CD8-positive, alpha-beta T cell (primary cell): ENCODE measurements at regions of chr5 and their contacts with region 1.

Region 1: GRCh38 chr5:81301271-81302015 is at the start of gene ZCCHC9:
- DNase-seq: peak; percentile 85 to 98 (median 94)
- ATAC-seq: peak; percentile 87
- H3K4me3 ChIP-seq: peak within 1 kb of the TSS; percentile 75 to 91
- H3K4me3 Mint-ChIP-seq: peak within 1 kb of the TSS; percentile 93
- H3K27ac ChIP-seq: peak within 1 kb of the TSS; percentile 79 to 87
- H3K27ac Mint-ChIP-seq: peak within 1 kb of the TSS; percentile 97
- H3K4me1 ChIP-seq: peaks cover 31% of the 10 kb centered on the region
- H3K4me1 Mint-ChIP-seq: peaks cover 60% of the 10 kb centered on the region
- H3K27me3 ChIP-seq: no peaks in the 10 kb centered on the region
- H3K27me3 Mint-ChIP-seq: no peaks in the 10 kb centered on the region
- CTCF ChIP-seq: no peak
- total RNA-seq, gene ZCCHC9: 14.6 to 15.3 TPM

Region 2: GRCh38 chr5:79514391-79515105 is 1786.9 kb before region 1 on chr5:
- CTCF ChIA-PET with region 1: no interaction called
- POLR2A ChIA-PET with region 1: no interaction called
- intact Hi-C with region 1: loop called in 1 of 2 experiments (anchors 10 kb)
- DNase-seq: peak; percentile 80 to 98 (median 92)
- ATAC-seq: peak; percentile 84
- H3K4me3 ChIP-seq: peak overlapping the region; percentile 62 to 73
- H3K4me3 Mint-ChIP-seq: peak overlapping the region; percentile 99
- H3K27ac ChIP-seq: peak overlapping the region; percentile 91 to 97
- H3K27ac Mint-ChIP-seq: peak overlapping the region; percentile 99
- H3K4me1 ChIP-seq: peaks cover 19% of the 10 kb centered on the region
- H3K4me1 Mint-ChIP-seq: peaks cover 42% of the 10 kb centered on the region
- H3K27me3 ChIP-seq: peaks cover 6 to 7% of the 10 kb centered on the region in 2 experiments
- H3K27me3 Mint-ChIP-seq: peaks cover 5% of the 10 kb centered on the region
- CTCF ChIP-seq: peak; percentile 13

Region 3: GRCh38 chr5:80255732-80256479 is 1045.5 kb before region 1 on chr5 and contains the start of gene SERINC5:
- CTCF ChIA-PET with region 1: no interaction called
- POLR2A ChIA-PET with region 1: no interaction called
- intact Hi-C with region 1: loop called in 1 of 2 experiments (anchors 10 kb)
- DNase-seq: peak; percentile 69 to 92 (median 83)
- ATAC-seq: peak; percentile 74
- H3K4me3 ChIP-seq: peak within 1 kb of the TSS; percentile 83 to 91
- H3K4me3 Mint-ChIP-seq: peak within 1 kb of the TSS; percentile 99
- H3K27ac ChIP-seq: peak within 1 kb of the TSS; percentile 89 to 94
- H3K27ac Mint-ChIP-seq: peak within 1 kb of the TSS; percentile 99
- H3K4me1 ChIP-seq: peaks cover 36% of the 10 kb centered on the region
- H3K4me1 Mint-ChIP-seq: peaks cover 57% of the 10 kb centered on the region
- H3K27me3 ChIP-seq: no peaks in the 10 kb centered on the region
- H3K27me3 Mint-ChIP-seq: no peaks in the 10 kb centered on the region
- CTCF ChIP-seq: no peak
- total RNA-seq, gene SERINC5: 112 to 117 TPM

Region 4: GRCh38 chr5:81014348-81014747 is 287.1 kb before region 1 on chr5:
- CTCF ChIA-PET with region 1: no interaction called
- POLR2A ChIA-PET with region 1: no interaction called
- intact Hi-C with region 1: loop called (anchors 10 kb)
- DNase-seq: peak in 1 of 9 experiments; percentile 25
- ATAC-seq: no peak
- H3K4me3 ChIP-seq: no peak overlapping the region
- H3K4me3 Mint-ChIP-seq: no peak overlapping the region
- H3K27ac ChIP-seq: no peak overlapping the region
- H3K27ac Mint-ChIP-seq: peak overlapping the region; percentile 58
- H3K4me1 ChIP-seq: peaks cover 52% of the 10 kb centered on the region
- H3K4me1 Mint-ChIP-seq: peaks cover 76% of the 10 kb centered on the region
- H3K27me3 ChIP-seq: no peaks in the 10 kb centered on the region
- H3K27me3 Mint-ChIP-seq: no peaks in the 10 kb centered on the region
- CTCF ChIP-seq: no peak

Region 5: GRCh38 chr5:81352954-81353588 is 51.6 kb after region 1 on chr5:
- CTCF ChIA-PET with region 1: no interaction called
- POLR2A ChIA-PET with region 1: no interaction called
- intact Hi-C with region 1: no loop called
- DNase-seq: no peak
- ATAC-seq: no peak
- H3K4me3 ChIP-seq: no peak overlapping the region
- H3K4me3 Mint-ChIP-seq: no peak overlapping the region
- H3K27ac ChIP-seq: no peak overlapping the region
- H3K27ac Mint-ChIP-seq: no peak overlapping the region
- H3K4me1 ChIP-seq: no peaks in the 10 kb centered on the region
- H3K4me1 Mint-ChIP-seq: no peaks in the 10 kb centered on the region
- H3K27me3 ChIP-seq: no peaks in the 10 kb centered on the region
- H3K27me3 Mint-ChIP-seq: peaks cover 2% of the 10 kb centered on the region
- CTCF ChIP-seq: no peak

Region 6: GRCh38 chr5:81851481-81852178 is 550.2 kb after region 1 on chr5:
- CTCF ChIA-PET with region 1: no interaction called
- POLR2A ChIA-PET with region 1: interaction called, 5 read pairs
- intact Hi-C with region 1: loop called (anchors 2 kb)
- DNase-seq: peak; percentile 81 to 95 (median 90)
- ATAC-seq: peak; percentile 91
- H3K4me3 ChIP-seq: peak overlapping the region; percentile 63 to 68
- H3K4me3 Mint-ChIP-seq: peak overlapping the region; percentile 94
- H3K27ac ChIP-seq: peak overlapping the region; percentile 56 to 58
- H3K27ac Mint-ChIP-seq: peak overlapping the region; percentile 97
- H3K4me1 ChIP-seq: peaks cover 26% of the 10 kb centered on the region
- H3K4me1 Mint-ChIP-seq: peaks cover 51% of the 10 kb centered on the region
- H3K27me3 ChIP-seq: no peaks in the 10 kb centered on the region
- H3K27me3 Mint-ChIP-seq: no peaks in the 10 kb centered on the region
- CTCF ChIP-seq: no peak

Region 7: DNA sequence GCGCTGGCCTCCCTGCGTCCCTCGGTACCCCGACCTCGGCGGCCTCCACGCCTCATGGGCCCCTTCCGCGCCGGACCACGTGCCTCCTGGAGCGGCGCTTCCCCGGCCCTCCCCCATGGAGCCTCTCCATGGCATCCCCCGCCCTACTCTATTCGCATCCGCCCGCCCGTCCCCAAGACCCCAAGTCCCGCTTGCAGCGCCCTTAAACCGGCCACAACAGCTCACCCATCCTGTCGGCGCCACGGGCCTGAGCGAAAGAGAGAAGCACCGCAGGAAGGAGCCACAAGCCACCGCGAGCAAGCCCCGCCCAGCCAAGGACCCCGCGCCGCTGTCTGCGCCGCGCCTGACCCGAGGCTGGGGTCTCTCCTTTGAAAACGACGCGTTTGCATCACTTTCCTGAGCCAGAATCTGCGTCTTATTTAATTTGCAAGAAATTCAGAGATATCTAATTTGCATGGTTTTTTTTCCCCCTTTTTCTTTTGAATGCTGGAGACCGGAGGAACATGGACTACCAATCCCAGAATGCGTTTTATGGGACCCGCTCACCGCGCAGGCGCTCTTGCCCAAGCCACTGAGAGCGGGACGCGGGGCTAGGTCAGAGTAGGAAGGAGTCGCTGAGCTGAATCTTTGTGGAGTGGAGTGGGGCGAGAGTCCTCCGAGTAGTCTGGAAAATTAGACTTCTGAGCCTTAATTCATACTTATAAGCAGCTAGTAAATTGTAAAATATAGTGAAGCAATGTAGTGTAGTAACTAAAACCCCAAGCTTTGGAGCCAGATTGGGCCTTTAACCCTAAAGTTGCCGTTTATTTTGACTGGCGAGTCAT is 976.9 kb after region 1 on chr5 and contains the start of gene RPS23:
- CTCF ChIA-PET with region 1: no interaction called
- POLR2A ChIA-PET with region 1: no interaction called
- intact Hi-C with region 1: loop called (anchors 1 to 5 kb)
- DNase-seq: peak; percentile 73 to 94 (median 86)
- ATAC-seq: peak; percentile 95
- H3K4me3 ChIP-seq: peak within 1 kb of the TSS; percentile 63 to 94
- H3K4me3 Mint-ChIP-seq: peak within 1 kb of the TSS; percentile 97
- H3K27ac ChIP-seq: peak within 1 kb of the TSS; percentile 71 to 84
- H3K27ac Mint-ChIP-seq: peak within 1 kb of the TSS; percentile 96
- H3K4me1 ChIP-seq: peaks cover 18% of the 10 kb centered on the region
- H3K4me1 Mint-ChIP-seq: peaks cover 44% of the 10 kb centered on the region
- H3K27me3 ChIP-seq: no peaks in the 10 kb centered on the region
- H3K27me3 Mint-ChIP-seq: no peaks in the 10 kb centered on the region
- CTCF ChIP-seq: no peak
- total RNA-seq, gene RPS23: 3,866 to 4,021 TPM

Region 8: DNA sequence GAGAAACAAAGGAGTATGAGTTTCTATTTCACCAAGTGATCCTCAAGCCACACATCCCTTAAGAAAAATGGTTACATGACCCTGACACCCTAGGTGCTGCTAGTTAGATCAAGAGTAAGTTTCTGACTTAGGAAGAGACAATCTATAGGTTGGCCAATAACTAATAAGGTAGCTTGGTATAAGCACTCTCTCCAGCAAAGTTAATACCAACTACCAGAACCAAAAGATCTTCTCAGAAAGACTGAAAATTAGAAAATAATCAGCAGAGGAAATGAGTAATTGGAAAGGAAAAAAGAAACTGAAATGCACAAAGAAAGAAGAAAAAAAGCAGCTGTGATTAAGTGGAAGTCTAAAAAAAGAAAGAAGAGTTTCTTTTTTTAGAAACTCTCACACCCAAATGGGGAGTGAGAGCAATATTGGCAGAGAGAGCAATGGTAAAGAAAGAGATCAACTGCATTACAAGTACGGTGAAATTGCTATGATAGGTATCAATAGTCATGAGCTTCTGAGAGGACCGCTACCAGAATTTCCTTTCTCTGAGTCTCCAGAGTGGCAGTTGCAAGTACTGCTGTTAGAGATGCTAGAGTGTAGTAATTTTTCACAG is 1580.2 kb after region 1 on chr5:
- CTCF ChIA-PET with region 1: no interaction called
- POLR2A ChIA-PET with region 1: no interaction called
- intact Hi-C with region 1: no loop called
- DNase-seq: no peak
- ATAC-seq: no peak
- H3K4me3 ChIP-seq: no peak overlapping the region
- H3K4me3 Mint-ChIP-seq: no peak overlapping the region
- H3K27ac ChIP-seq: no peak overlapping the region
- H3K27ac Mint-ChIP-seq: no peak overlapping the region
- H3K4me1 ChIP-seq: no peaks in the 10 kb centered on the region
- H3K4me1 Mint-ChIP-seq: no peaks in the 10 kb centered on the region
- H3K27me3 ChIP-seq: no peaks in the 10 kb centered on the region
- H3K27me3 Mint-ChIP-seq: no peaks in the 10 kb centered on the region
- CTCF ChIP-seq: no peak